ENCODE measurements at regions of chr15 and their contacts with region 1.

Region 1: GRCh38 chr15:72199711-72200212 is 2.2 kb upstream of the GRAMD2A start:
- DNase-seq: peak; percentile 87

Region 2: DNA sequence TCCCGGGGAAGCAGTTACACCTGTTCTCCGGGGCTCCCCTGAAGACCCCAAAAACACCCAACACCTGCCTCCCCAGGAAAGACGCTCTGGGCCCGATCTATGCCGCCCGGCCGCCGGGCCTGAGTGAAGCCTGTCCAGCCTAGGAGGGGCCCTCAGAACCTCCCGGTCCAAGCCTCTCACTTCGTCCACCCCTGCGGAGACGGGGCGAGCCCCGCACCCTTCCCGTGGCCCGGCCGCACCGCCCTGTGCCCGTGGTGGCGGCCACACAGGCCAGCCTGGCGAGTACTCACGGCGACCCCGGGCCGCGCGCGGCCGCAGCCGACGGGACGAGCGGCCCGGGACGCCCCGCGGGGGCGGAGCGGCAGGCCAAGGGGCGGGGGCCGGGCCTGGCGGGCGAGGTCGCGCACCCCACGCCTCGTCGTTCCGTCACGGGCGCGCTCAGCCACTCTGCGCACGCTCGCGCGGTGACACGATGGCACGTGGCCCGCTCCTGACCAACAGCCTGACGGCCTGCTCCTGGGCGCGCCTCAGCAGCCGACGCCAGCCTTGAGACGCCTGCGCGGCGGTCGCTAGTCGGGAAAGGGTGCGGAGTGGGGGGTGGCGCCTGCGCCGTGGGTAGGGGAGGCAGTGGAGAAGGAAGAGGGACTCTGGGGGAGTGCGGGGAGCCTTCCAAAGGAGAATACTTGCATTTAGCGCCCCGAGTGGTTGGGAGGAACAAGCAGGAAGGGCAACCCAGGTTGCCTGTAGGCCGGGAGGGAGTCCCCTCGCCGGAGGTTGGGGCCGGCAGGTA is 72.6 kb after region 1 on chr15 and contains the start of gene PARP6:
- intact Hi-C with region 1: loop called (anchors 1 kb)
- DNase-seq: peak; percentile 99
- total RNA-seq, gene PARP6: 34.6 TPM

Region 3: DNA sequence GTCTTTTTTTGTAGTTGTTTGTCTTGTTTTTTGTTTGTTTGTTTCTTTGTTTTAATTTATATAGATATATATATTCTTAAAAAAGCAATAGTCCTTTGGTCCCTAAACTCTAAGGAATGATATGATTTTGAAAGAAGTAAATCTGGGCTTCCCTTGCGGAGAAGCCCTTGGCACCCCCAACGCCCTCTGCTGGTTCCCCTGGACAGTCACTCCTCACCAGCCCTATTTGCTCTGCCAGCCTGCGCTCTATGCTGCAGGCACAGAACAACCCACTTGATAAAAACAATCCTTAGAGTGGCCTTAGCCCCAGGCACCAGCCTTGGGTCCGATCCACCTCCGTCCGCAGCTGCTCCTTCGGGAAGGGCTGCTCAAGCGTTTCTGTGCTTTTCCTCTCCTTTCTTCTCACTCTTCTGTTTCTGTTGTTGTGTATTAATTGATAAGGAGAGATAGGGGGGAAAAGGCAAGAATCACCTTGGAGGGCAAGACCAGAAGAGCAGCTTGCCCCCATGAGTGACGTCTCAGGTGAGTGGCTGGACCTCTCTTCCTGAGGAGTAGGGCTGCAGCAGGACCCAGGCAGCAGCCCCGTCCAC is 86.3 kb after region 1 on chr15:
- intact Hi-C with region 1: loop called (anchors 5 kb)
- DNase-seq: no peak

Measured in cardiac septum (tissue), 1 donor.